ENCODE measurements at regions of chr3 and their contacts with region 1.

Region 1: GRCh38 chr3:4888913-4889846 is 90.1 kb upstream of the BHLHE40 start:
- DNase-seq: peak in 1 of 7 donors; percentile 42
- H3K4me3 ChIP-seq: no peak overlapping the region
- H3K27ac ChIP-seq: peak overlapping the region in 3 of 5 donors; percentile 43 to 56 (median 52)
- H3K4me1 ChIP-seq: peaks cover 0 to 8% of the 10 kb centered on the region in 2 donors
- H3K27me3 ChIP-seq: no peaks in the 10 kb centered on the region
- CTCF ChIP-seq: no peak
- POLR2A ChIP-seq: no peak

Region 2: GRCh38 chr3:4950351-4950784 is 61.2 kb after region 1 on chr3:
- intact Hi-C with region 1: loop called in 1 of 2 experiments (anchors 10 kb)
- DNase-seq: no peak
- H3K4me3 ChIP-seq: no peak overlapping the region
- H3K27ac ChIP-seq: peak overlapping the region in 1 of 5 donors; percentile 53
- H3K4me1 ChIP-seq: no peaks in the 10 kb centered on the region
- H3K27me3 ChIP-seq: no peaks in the 10 kb centered on the region
- CTCF ChIP-seq: no peak
- POLR2A ChIP-seq: no peak

Region 3: GRCh38 chr3:5057857-5058324 is 168.7 kb after region 1 on chr3:
- intact Hi-C with region 1: no loop called
- DNase-seq: peak; percentile 79 to 95 (median 87)
- H3K4me3 ChIP-seq: no peak overlapping the region
- H3K27ac ChIP-seq: no peak overlapping the region
- H3K4me1 ChIP-seq: peaks cover 0 to 27% of the 10 kb centered on the region in 2 donors
- H3K27me3 ChIP-seq: no peaks in the 10 kb centered on the region
- CTCF ChIP-seq: peak; percentile 61 to 90 (median 86)
- POLR2A ChIP-seq: no peak

Region 4: DNA sequence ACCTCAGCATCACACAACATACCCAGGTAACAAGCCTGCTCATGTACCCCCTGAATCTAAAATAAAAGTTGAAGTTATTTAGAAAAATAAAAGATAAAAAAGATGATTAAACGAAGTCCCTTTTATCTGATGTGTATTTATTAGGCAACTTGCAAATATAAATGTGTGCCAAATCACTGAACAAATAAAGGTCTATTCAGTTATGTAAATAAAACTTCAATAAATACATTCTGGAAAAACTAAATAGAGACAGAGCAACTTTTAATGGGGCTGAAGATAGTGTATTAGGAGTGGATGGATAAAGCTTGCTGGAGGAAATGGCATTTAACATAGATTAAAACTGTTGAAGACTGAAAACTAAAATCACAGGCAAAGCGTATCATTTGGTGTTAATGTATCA is 1293.7 kb after region 1 on chr3:
- intact Hi-C with region 1: no loop called
- DNase-seq: no peak
- H3K4me3 ChIP-seq: no peak overlapping the region
- H3K27ac ChIP-seq: no peak overlapping the region
- H3K4me1 ChIP-seq: no peaks in the 10 kb centered on the region
- H3K27me3 ChIP-seq: no peaks in the 10 kb centered on the region
- CTCF ChIP-seq: no peak
- POLR2A ChIP-seq: no peak